ENCODE measurements at regions of chr1 and their contacts with region 1.

Region 1: DNA sequence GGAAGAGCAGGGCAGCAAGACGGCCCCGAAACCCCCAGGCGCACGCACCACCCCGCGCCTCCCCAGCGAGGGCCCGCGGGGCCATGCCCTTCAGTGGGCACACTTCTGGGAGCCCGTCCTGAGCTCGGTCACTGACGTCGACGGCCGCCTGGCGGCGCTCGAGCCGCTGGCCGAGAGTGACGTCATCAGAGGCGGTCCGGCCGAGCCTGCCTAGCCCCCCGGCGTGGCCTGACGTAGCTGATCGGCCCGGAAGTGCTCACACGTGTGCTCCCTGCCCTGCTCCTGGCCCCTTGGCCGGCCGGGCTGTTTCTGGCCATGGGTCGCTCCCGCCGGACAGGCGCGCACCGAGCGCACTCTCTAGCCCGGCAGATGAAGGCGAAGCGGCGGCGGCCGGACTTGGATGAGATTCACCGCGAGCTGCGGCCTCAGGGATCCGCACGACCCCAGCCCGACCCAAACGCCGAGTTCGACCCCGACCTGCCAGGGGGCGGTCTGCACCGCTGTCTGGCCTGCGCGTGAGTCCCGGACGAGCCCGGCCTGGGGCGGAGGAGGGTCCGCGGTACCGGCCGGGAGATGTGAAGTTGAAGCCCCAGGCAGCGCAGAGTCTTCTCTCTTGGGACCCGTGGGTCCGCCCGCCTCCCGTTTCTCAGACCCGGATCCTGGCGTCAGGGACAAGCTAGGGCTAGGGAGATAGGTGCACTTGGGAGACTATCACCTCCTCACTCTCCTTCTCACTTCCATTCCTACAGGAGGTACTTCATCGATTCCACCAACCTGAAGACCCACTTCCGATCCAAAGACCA is at the start of gene ZNF593:
- DNase-seq: peak; percentile 90 to 92
- H3K4me3 ChIP-seq: peak within 1 kb of the TSS; percentile 81
- H3K4me3 Mint-ChIP-seq: peak within 1 kb of the TSS; percentile 79
- H3K27ac Mint-ChIP-seq: peak within 1 kb of the TSS; percentile 84
- H3K4me1 ChIP-seq: no peaks in the 10 kb centered on the region
- H3K4me1 Mint-ChIP-seq: peaks cover 2% of the 10 kb centered on the region
- H3K27me3 ChIP-seq: no peaks in the 10 kb centered on the region
- H3K27me3 Mint-ChIP-seq: no peaks in the 10 kb centered on the region
- CTCF ChIP-seq: peak; percentile 71 to 81
- total RNA-seq, gene ZNF593: 50.0 and 50.8 TPM in 2 replicates

Region 2: DNA sequence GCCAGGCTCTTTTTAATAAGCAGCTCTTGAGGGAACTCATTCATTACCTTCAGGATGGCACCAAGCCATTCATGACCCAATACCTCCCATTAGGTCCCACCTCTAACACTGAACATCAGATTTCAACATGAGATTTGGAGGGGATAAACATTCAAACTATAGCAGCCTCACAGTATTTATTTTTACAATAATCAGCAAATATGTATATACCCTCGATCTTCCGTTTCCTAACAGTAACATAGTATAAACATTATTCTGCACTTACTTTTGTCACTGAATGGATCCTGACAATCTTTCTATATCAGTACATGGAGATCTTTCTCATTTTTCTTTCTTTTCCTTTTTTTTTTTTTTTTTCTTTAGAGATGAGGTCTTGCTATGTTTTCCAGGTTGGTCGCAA is 25.9 kb after region 1 on chr1:
- CTCF ChIA-PET with region 1: no interaction called
- POLR2A ChIA-PET with region 1: interaction called, 15 read pairs
- intact Hi-C with region 1: no loop called
- DNase-seq: no peak
- H3K4me3 ChIP-seq: no peak overlapping the region
- H3K4me3 Mint-ChIP-seq: no peak overlapping the region
- H3K27ac Mint-ChIP-seq: no peak overlapping the region
- H3K4me1 ChIP-seq: no peaks in the 10 kb centered on the region
- H3K4me1 Mint-ChIP-seq: peaks cover under 1% of the 10 kb centered on the region
- H3K27me3 ChIP-seq: no peaks in the 10 kb centered on the region
- H3K27me3 Mint-ChIP-seq: no peaks in the 10 kb centered on the region
- CTCF ChIP-seq: no peak

Measured in Caco-2 (cell line).